ENCODE measurements at regions of chr7 and their contacts with region 1.

Region 1: DNA sequence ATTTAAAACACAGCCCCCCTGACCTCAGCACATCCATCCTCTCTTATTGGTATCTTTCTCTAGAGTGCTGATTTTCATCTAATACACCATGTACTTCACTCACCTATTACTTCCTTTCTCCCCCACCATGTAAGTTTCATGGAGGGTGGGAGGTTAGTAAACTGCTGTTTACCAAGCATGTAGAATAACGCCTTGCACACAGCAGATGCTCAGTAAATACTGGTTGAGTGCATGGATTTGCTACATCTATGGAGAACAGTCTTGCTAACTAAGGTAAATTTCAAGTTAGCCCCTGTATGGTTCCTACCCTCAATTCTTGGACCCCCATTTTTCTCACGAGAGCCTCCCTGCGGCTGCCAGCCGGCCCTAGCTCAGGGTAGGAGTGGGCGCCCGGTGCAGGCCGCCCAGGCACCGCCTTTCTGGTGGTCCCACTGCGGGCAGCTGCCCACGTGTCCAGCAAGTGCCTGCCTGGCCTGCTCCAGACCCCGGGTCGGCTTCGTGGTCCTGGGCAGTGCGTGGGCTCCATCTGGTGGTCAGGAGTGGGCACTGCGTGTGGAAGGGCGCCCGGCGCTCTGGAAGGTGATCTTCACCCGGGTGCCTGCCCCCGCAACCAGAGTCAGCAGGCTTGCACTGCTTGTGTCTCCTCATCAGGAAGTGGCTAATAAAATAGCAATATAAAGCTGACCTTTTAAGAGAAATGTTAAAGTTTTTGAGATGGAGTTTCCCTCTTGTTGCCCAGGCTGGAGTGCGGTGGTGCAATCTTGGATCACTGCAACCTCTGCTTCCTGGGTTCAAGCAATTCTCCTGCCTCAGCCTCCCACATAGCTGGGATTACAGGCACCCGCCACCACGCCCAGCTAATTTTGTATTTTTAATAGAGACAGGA is 63.4 kb upstream of the DNAJB6 start:
- DNase-seq: no peak
- H3K4me3 ChIP-seq: no peak overlapping the region
- CTCF ChIP-seq: peak; percentile 99

Region 2: GRCh38 chr7:156969972-156970420 is 303.5 kb before region 1 on chr7:
- CTCF ChIA-PET with region 1: interaction called, 45 read pairs
- POLR2A ChIA-PET with region 1: no interaction called
- DNase-seq: no peak
- H3K4me3 ChIP-seq: no peak overlapping the region
- CTCF ChIP-seq: no peak

Region 3: GRCh38 chr7:157228864-157229422 is 44.5 kb before region 1 on chr7:
- CTCF ChIA-PET with region 1: interaction called, 38 read pairs
- POLR2A ChIA-PET with region 1: no interaction called
- DNase-seq: no peak
- H3K4me3 ChIP-seq: no peak overlapping the region
- CTCF ChIP-seq: peak; percentile 71

Region 4: GRCh38 chr7:157263156-157263555 is 10.3 kb before region 1 on chr7:
- CTCF ChIA-PET with region 1: interaction called, 18 read pairs
- POLR2A ChIA-PET with region 1: no interaction called
- DNase-seq: no peak
- H3K4me3 ChIP-seq: no peak overlapping the region
- CTCF ChIP-seq: no peak

Region 5: DNA sequence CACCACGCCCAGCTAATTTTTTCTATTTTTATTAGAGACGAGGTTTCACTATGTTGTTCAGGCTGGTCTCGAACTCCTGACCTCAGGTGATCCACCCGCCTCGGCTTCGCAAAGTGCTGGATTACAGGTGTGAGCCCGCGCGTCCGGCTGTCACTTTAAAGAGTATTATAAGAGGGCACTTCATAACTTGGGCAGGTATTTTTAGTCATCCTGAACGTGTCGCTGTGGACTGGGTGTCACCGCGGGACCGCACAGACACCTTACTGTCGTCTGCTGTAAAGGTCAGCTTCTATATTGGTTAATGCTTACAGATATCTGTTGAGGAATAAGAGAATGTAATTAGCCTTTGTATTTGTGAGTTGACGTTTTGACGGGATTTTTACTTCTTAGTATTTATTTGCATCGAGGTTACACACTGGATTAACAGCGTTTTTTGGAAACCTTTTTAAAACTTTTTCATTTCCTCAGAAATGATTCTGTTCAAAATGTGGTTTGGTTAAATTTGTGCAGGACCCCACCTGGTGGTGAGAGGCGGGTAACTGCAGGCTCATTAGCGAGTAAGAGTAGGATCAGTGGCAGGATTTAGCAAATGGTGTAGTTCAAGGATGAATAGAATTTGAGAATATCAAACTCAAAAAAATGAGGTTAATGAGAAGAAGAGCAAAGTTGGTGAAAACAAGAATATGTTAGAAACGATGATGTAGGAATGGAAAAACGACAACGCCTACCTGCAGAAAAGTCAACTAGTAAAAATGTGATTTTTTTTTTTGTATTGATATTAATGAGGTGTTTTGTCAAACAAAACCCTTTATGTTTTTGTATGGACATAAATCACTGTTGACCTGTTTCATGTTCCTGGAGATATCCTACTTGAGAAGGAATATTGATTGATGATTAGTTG is 66.6 kb after region 1 on chr7:
- CTCF ChIA-PET with region 1: interaction called, 50 read pairs
- POLR2A ChIA-PET with region 1: interaction called, 3 read pairs
- DNase-seq: no peak
- H3K4me3 ChIP-seq: peak overlapping the region; percentile 12; the same call in 1 of the 2 replicates
- CTCF ChIP-seq: peak; percentile 76